ENCODE measurements at regions of chr5 and their contacts with region 1.

Region 1: GRCh38 chr5:76818844-76819831 is at the start of gene F2RL1:
- DNase-seq: peak; percentile 93
- ATAC-seq: peak; percentile 65
- H3K4me3 ChIP-seq: peak within 1 kb of the TSS; percentile 79
- H3K27ac ChIP-seq: peak within 1 kb of the TSS; percentile 97
- H3K4me1 ChIP-seq: peaks cover 64% of the 10 kb centered on the region
- H3K27me3 ChIP-seq: no peaks in the 10 kb centered on the region
- CTCF ChIP-seq: no peak
- total RNA-seq, gene F2RL1: 163 and 167 TPM in 2 replicates

Region 2: GRCh38 chr5:77008413-77008812 is 189.3 kb after region 1 on chr5:
- CTCF ChIA-PET with region 1: no interaction called
- POLR2A ChIA-PET with region 1: interaction called, 19 read pairs
- intact Hi-C with region 1: no loop called
- DNase-seq: no peak
- ATAC-seq: no peak
- H3K4me3 ChIP-seq: no peak overlapping the region
- H3K27ac ChIP-seq: no peak overlapping the region
- H3K4me1 ChIP-seq: no peaks in the 10 kb centered on the region; the same call in 1 of the 2 replicates
- H3K27me3 ChIP-seq: no peaks in the 10 kb centered on the region
- CTCF ChIP-seq: no peak

Measured in PC-3 (cell line).